T-cell (primary cell): ENCODE measurements at regions of chr12 and their contacts with region 1.

Region 1: DNA sequence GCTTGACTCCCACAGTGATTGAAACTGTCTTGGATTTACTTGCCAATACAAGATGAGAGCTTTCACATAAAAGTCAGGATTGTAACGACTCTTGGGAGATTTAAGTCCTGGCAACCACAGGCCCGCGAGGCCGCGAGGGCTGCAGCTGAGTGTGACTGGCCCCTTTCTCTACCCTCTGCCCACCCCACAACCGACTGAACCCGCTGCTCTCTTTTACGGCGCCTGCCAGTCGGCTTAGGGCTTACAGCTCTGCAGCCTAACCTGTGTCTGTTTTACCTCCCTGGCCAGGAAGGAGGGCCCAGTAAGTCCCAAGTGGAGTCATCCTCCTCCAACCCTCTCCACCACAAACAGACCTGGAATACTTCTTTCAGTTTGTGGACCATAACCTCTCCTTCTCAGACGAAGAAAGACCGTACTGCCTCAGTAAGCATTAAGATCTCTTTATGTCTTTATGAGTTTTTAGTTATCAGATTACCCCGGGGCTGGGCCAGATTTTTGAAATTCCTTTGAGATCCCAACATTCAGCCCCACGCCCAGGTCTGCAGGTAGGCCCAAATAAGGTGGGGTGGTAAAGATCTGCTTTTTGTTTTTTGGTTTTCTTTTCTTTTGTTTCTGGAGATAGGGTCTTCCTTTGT is 12.6 kb upstream of the TIGAR start:
- DNase-seq: no peak
- ATAC-seq: peak in 1 of 4 experiments; percentile 10
- H3K4me3 ChIP-seq: no peak overlapping the region
- H3K4me3 Mint-ChIP-seq: no peak overlapping the region
- H3K27ac ChIP-seq: no peak overlapping the region
- H3K27ac Mint-ChIP-seq: no peak overlapping the region
- H3K4me1 ChIP-seq: no peaks in the 10 kb centered on the region
- H3K4me1 Mint-ChIP-seq: peaks cover 0 to 4% (median 0%) of the 10 kb centered on the region in 3 donors
- H3K27me3 ChIP-seq: no peaks in the 10 kb centered on the region
- H3K27me3 Mint-ChIP-seq: no peaks in the 10 kb centered on the region

Region 2: DNA sequence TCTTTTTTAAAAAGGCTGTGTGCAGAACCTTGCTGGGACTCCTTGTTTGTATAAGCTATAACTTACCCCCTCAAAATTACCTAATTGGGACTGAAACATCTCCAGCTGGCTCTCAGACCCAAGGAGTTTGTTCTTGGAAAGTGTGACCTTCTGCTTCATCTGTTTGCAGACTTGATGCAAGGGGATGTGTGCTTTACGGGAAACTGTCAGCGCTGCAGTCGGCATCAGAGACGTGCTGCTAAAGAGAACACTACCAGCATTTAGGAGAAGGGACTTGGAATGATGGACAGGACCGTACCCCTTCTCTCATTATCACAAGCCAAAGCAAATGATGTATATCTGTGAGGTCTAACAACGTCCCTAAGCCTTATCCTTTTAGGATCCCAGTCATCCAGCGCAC is 261.0 kb before region 1 on chr12:
- CTCF ChIA-PET with region 1: no interaction called
- POLR2A ChIA-PET with region 1: interaction called in 1 of 2 experiments, 12 read pairs
- DNase-seq: no peak
- ATAC-seq: no peak
- H3K4me3 ChIP-seq: no peak overlapping the region
- H3K4me3 Mint-ChIP-seq: no peak overlapping the region
- H3K27ac ChIP-seq: no peak overlapping the region
- H3K27ac Mint-ChIP-seq: no peak overlapping the region
- H3K4me1 ChIP-seq: no peaks in the 10 kb centered on the region
- H3K4me1 Mint-ChIP-seq: peaks cover 0 to 8% (median 2%) of the 10 kb centered on the region in 3 donors
- H3K27me3 ChIP-seq: no peaks in the 10 kb centered on the region
- H3K27me3 Mint-ChIP-seq: no peaks in the 10 kb centered on the region

Region 3: GRCh38 chr12:4107436-4107878 is 201.0 kb before region 1 on chr12:
- CTCF ChIA-PET with region 1: no interaction called
- POLR2A ChIA-PET with region 1: no interaction called
- DNase-seq: peak; percentile 29 to 91 (median 70)
- ATAC-seq: peak; percentile 96 to 100 (median 97)
- H3K4me3 ChIP-seq: no peak overlapping the region
- H3K4me3 Mint-ChIP-seq: peak overlapping the region in 2 of 3 donors; percentile 28 to 45
- H3K27ac ChIP-seq: peak overlapping the region; percentile 65
- H3K27ac Mint-ChIP-seq: peak overlapping the region; percentile 71 to 79
- H3K4me1 ChIP-seq: peaks cover 7 to 12% of the 10 kb centered on the region in 2 experiments
- H3K4me1 Mint-ChIP-seq: peaks cover 14 to 21% (median 16%) of the 10 kb centered on the region in 3 donors
- H3K27me3 ChIP-seq: no peaks in the 10 kb centered on the region
- H3K27me3 Mint-ChIP-seq: no peaks in the 10 kb centered on the region